ENCODE measurements at regions of chr5 and their contacts with region 1.

Region 1: DNA sequence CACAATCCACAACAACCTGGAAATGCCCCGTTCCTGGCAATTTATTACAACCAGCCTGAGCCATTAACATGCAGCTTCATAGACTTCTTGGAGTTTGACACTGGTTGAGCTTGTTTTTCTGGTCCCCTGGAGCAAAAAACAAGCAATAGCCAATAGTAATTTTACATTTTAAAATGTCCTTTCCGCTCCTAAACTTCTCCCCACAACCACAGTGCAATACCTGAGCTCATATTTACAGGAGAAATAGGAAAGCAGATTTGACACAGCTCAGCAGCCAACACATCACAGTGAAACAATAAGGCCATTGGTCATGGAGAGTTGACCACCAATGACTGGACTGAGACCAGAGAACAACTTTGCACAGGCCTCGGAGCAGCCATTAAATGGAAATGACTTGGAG is 73.1 kb downstream of the ENC1 start:
- DNase-seq: no peak
- H3K4me3 ChIP-seq: no peak overlapping the region
- H3K27ac ChIP-seq: no peak overlapping the region
- H3K4me1 ChIP-seq: peaks cover 0 to 8% (median 0%) of the 10 kb centered on the region in 4 donors
- H3K27me3 ChIP-seq: no peaks in the 10 kb centered on the region
- CTCF ChIP-seq: no peak
- EP300 ChIP-seq: no peak
- POLR2A ChIP-seq: no peak

Region 2: GRCh38 chr5:74625742-74626241 is 58.3 kb after region 1 on chr5:
- in situ Hi-C with region 1: no loop called
- intact Hi-C with region 1: loop called (anchors 10 kb)
- DNase-seq: no peak
- H3K4me3 ChIP-seq: no peak overlapping the region
- H3K27ac ChIP-seq: no peak overlapping the region
- H3K4me1 ChIP-seq: peaks cover 0 to 2% (median 0%) of the 10 kb centered on the region in 4 donors
- H3K27me3 ChIP-seq: no peaks in the 10 kb centered on the region
- CTCF ChIP-seq: no peak
- EP300 ChIP-seq: no peak
- POLR2A ChIP-seq: no peak

Measured in transverse colon (tissue), 4 donors.